ENCODE measurements at regions of chr19 and their contacts with region 1.

Region 1: GRCh38 chr19:19488875-19489690 is 26.3 kb downstream of the TSSK6 start:
- DNase-seq: peak; percentile 93
- H3K4me3 Mint-ChIP-seq: peak overlapping the region; percentile 53
- H3K27ac Mint-ChIP-seq: peak overlapping the region; percentile 98
- H3K4me1 Mint-ChIP-seq: peaks cover 36% of the 10 kb centered on the region
- H3K27me3 Mint-ChIP-seq: no peaks in the 10 kb centered on the region

Region 2: GRCh38 chr19:19366612-19367396 is 122.3 kb before region 1 on chr19:
- intact Hi-C with region 1: loop called (anchors 1 kb)
- DNase-seq: peak; percentile 68
- H3K4me3 Mint-ChIP-seq: peak overlapping the region; percentile 1
- H3K27ac Mint-ChIP-seq: peak overlapping the region; percentile 50
- H3K4me1 Mint-ChIP-seq: peaks cover 13% of the 10 kb centered on the region
- H3K27me3 Mint-ChIP-seq: no peaks in the 10 kb centered on the region

Region 3: DNA sequence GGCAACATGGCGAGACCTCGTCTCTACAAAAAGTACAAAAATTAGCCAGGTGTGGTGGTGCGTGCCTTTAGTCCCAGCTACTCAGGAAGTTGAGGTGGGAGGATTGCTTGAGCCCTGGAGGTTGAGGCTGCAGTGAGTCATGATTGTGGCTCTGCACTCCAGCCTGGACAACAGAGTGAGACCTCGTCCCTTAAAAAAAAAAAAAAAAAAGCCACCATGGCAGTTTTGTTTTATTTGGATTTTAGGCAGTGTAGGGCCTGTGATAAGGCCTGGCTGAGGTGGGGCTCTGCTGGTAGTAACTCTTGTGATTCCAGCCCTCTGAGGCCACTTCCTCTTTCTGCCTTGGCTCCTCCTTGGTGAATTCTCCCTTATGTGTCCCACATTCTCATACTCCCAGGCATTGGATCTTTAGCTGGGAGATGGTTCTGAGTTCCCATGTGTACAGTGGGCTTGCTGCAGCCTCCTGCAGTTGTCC is 44.4 kb before region 1 on chr19:
- intact Hi-C with region 1: loop called (anchors 5 kb)
- DNase-seq: no peak
- H3K4me3 Mint-ChIP-seq: peak overlapping the region; percentile 28
- H3K27ac Mint-ChIP-seq: peak overlapping the region; percentile 74
- H3K4me1 Mint-ChIP-seq: peaks cover 54% of the 10 kb centered on the region
- H3K27me3 Mint-ChIP-seq: no peaks in the 10 kb centered on the region

Region 4: GRCh38 chr19:19459707-19460251 is 29.3 kb before region 1 on chr19:
- intact Hi-C with region 1: loop called (anchors 1 kb)
- DNase-seq: peak; percentile 66
- H3K4me3 Mint-ChIP-seq: peak overlapping the region; percentile 77
- H3K27ac Mint-ChIP-seq: peak overlapping the region; percentile 94
- H3K4me1 Mint-ChIP-seq: peaks cover 60% of the 10 kb centered on the region
- H3K27me3 Mint-ChIP-seq: no peaks in the 10 kb centered on the region

Region 5: GRCh38 chr19:19470579-19470978 is 18.5 kb before region 1 on chr19:
- intact Hi-C with region 1: no loop called
- DNase-seq: no peak
- H3K4me3 Mint-ChIP-seq: no peak overlapping the region
- H3K27ac Mint-ChIP-seq: no peak overlapping the region
- H3K4me1 Mint-ChIP-seq: peaks cover 37% of the 10 kb centered on the region
- H3K27me3 Mint-ChIP-seq: no peaks in the 10 kb centered on the region

Measured in activated T-helper 2 cell treated with anti-CD3 and anti-CD28 coated beads, Interferon-gamma antibody, Interleukin-2, Interleukin-4, amounts not matched to agents 10 μg/mL and 5 μg/mL and 100 μg/mL, durations not matched to agents 14 hours and 24 hours and 36 hours (primary cell).